Activated naive CD4-positive, alpha-beta T cell treated with anti-CD3 and anti-CD28 coated beads for 36 hours (primary cell): ENCODE measurements at regions of chr7 and their contacts with region 1.

Region 1: GRCh38 chr7:12638851-12639467 is 48.5 kb upstream of the ARL4A start:
- DNase-seq: no peak
- H3K4me3 Mint-ChIP-seq: no peak overlapping the region
- H3K27ac Mint-ChIP-seq: no peak overlapping the region
- H3K4me1 Mint-ChIP-seq: peaks cover 19% of the 10 kb centered on the region
- H3K27me3 Mint-ChIP-seq: no peaks in the 10 kb centered on the region

Region 2: GRCh38 chr7:12524794-12525386 is 114.1 kb before region 1 on chr7:
- CTCF ChIA-PET with region 1: interaction called, 7 read pairs
- intact Hi-C with region 1: loop called (anchors 1 kb)
- DNase-seq: no peak
- H3K4me3 Mint-ChIP-seq: no peak overlapping the region
- H3K27ac Mint-ChIP-seq: no peak overlapping the region
- H3K4me1 Mint-ChIP-seq: no peaks in the 10 kb centered on the region
- H3K27me3 Mint-ChIP-seq: peaks cover 21% of the 10 kb centered on the region

Region 3: GRCh38 chr7:13117103-13117502 is 478.1 kb after region 1 on chr7:
- CTCF ChIA-PET with region 1: no interaction called
- intact Hi-C with region 1: loop called (anchors 2 kb)
- DNase-seq: no peak
- H3K4me3 Mint-ChIP-seq: no peak overlapping the region
- H3K27ac Mint-ChIP-seq: no peak overlapping the region
- H3K4me1 Mint-ChIP-seq: no peaks in the 10 kb centered on the region
- H3K27me3 Mint-ChIP-seq: peaks cover 5% of the 10 kb centered on the region

Region 4: DNA sequence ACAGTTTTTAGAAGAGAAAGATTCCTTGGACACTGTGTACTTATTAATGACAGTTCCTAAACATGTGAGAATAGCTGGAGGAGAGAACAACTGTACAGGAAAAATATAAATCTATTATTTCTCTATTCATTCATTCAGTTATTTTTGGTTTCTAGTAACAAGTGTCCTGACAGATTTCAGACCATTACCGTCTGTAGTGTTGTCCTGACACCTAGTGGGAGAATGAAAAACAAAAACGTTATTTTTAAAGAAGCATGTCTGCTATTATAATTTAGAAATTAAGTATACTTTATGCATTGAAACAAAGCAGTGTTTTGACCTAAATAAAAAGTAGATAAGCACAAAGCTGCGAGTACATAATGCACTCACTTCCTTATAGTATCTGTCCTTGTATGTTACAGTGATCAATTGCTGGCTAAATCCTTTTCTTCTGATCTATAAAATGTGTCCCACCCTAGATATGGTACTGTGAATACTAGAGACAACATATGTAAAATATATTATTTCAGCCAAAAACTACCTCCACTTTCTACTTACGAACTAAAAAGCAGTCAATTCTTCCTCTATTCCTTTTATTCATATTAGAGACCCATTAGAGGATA is 624.1 kb after region 1 on chr7:
- CTCF ChIA-PET with region 1: interaction called, 5 read pairs
- intact Hi-C with region 1: loop called (anchors 1 kb)
- DNase-seq: no peak
- H3K4me3 Mint-ChIP-seq: no peak overlapping the region
- H3K27ac Mint-ChIP-seq: no peak overlapping the region
- H3K4me1 Mint-ChIP-seq: no peaks in the 10 kb centered on the region
- H3K27me3 Mint-ChIP-seq: peaks cover 2% of the 10 kb centered on the region

Region 5: DNA sequence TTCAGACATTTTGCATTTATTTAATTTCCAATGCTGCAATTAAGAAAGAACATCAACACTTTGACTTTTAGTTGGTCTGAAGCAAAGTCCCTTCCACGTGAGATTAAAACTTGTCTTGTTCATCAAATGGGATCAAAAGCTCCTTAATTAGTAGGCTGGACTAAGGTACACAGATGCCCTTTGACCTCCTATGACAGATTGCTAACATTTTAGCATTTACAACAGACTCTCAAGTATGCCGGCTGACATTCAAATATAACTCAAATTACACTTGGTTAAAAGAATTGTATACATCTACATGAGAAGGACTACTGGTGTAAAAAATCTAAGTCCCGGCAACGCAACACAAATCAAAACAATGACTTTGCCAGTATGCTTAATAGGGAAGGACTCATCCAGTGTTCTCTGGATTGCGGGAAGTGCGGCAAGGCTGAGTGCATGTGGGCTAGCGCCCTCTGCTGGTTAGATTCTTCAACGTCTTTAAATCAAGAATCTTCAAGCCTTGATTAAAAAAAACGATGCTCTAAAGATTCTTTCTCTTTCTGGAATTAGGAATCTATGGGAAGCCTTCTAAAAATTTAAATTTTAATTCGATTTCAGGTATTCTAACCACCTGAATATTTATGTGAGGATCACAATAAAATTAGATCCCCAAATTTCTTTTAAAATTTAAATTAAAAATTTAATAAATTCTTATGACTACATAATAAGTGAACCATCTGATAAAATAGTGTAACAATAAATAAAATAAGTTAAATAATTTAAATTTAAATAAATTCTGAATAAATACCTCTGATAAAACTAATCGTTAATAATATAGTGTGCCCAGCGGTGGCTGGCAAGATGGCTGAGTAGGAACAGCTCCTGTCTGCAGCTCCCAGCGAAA is 1818.9 kb after region 1 on chr7:
- CTCF ChIA-PET with region 1: no interaction called
- intact Hi-C with region 1: loop called (anchors 2 kb)
- DNase-seq: peak; percentile 56
- H3K4me3 Mint-ChIP-seq: no peak overlapping the region
- H3K27ac Mint-ChIP-seq: no peak overlapping the region
- H3K4me1 Mint-ChIP-seq: no peaks in the 10 kb centered on the region
- H3K27me3 Mint-ChIP-seq: no peaks in the 10 kb centered on the region